Common myeloid progenitor, CD34-positive (primary cell): ENCODE measurements at regions of chr17 and their contacts with region 1.

Region 1: DNA sequence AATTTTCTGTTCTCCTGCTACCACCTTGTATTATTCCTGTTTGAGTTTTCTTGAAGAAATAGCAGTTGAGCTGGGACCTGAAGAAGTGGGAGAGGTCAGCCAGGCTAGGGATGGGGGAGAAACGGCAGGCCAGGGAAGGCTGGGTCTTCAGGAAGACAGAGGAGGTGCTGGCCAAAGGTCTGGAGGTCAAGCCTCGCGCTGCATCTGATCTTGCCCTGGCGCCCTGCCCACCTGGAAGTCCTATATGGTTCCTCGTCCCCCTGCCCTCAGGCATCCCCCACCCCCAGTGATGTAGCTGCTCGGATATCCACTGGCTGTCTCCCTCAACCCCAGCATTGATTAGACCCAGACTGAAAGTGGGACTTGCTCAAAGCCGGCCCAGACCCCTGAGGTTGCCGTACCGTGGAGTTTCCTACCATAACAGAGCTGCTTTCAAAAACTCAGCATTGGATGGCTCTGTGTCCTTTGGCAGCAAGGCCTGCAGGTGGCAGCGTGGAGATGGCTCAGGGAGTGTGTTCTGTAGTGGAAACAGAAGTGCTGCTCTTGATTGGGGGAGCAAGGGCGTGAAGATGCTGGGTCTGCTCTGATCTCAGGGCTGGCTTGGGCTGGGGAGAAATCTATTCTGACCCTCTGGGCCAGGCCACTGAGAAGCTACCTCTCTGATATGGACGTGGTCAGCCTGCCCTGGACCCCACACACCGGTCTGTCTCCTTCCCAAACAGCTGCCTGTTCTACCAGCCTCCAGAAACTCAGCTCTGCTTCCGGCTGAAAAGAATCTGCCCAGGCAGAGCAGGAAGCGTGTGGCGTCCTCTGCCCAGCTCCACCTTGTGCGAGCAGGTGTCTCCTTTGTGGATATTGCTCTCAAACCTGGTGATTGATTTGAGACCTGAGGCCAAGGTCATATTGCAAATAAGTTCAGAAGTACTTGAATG is 107.0 kb upstream of the CACNG5 start:
- DNase-seq: peak; percentile 56 to 79 (median 78)
- H3K4me3 ChIP-seq: peak overlapping the region in 1 of 7 experiments; percentile 6
- H3K27ac ChIP-seq: no peak overlapping the region
- H3K4me1 ChIP-seq: peaks cover 0 to 3% (median 0%) of the 10 kb centered on the region in 4 experiments
- H3K27me3 ChIP-seq: peaks cover 0 to 4% (median 0%) of the 10 kb centered on the region in 5 experiments

Region 2: DNA sequence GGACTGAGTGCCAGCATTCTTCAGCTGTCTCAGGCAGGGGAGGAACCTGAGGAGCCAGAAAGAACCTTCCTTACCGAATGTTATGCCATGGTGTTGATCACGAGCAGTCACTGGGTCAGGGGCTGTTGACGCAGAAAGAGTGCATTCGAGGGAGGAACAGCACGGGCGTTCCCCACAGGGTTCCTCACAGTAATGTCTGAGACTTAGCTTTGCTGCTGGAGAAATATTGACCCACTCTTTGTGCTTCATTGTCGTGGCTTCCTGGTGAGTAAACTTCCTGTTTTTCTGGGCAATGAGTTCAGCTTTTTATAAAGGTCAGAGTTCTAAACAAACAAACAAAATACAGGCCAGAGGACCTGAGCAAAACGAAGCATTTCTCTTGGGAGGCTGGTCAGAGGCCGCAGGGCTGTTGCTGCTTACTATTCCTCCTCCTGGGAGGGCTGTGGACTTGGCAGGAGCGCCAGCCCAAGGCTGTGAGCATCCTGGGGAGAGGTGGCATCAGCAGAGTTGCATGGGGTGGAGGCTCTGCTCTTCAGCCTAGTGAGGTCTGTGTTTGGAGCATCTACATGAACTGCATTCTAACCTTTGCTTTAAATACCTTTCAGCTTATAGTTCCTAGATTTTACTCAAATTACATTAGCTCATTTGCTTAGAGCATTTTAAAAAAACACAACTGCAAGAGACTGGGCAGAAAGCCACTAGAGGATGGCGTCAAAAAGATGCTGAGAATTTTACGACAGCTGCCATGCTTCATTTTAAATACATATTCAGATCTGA is 36.1 kb before region 1 on chr17:
- CTCF ChIA-PET with region 1: no interaction called
- POLR2A ChIA-PET with region 1: no interaction called
- DNase-seq: no peak
- H3K4me3 ChIP-seq: no peak overlapping the region
- H3K27ac ChIP-seq: no peak overlapping the region
- H3K4me1 ChIP-seq: peaks cover 0 to 9% (median 3%) of the 10 kb centered on the region in 4 experiments
- H3K27me3 ChIP-seq: no peaks in the 10 kb centered on the region

Region 3: GRCh38 chr17:66713533-66714042 is 14.3 kb before region 1 on chr17:
- CTCF ChIA-PET with region 1: interaction called, 11 read pairs
- POLR2A ChIA-PET with region 1: no interaction called
- DNase-seq: no peak
- H3K4me3 ChIP-seq: no peak overlapping the region
- H3K27ac ChIP-seq: no peak overlapping the region
- H3K4me1 ChIP-seq: peaks cover 5 to 22% (median 14%) of the 10 kb centered on the region in 4 experiments
- H3K27me3 ChIP-seq: no peaks in the 10 kb centered on the region

Region 4: DNA sequence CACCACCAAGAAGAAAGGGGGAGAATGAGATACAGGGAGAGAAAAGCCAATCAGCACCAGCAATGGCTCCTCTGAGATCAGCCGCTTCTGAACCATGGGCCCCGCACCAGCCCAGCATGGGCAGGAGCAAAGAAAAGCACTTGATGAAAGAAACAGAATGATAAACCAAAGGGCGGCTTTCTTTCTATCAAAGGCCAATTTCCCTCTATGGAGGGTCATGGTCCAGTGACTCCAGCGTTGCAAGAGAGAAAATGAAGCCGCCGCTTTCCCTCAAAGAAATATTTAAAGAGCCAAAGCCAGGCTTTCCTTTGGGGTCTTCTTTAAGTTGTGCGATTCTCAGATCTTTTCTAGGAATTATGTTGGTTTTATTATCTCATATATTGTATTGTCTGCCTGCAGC is 22.2 kb after region 1 on chr17:
- CTCF ChIA-PET with region 1: no interaction called
- POLR2A ChIA-PET with region 1: no interaction called
- DNase-seq: no peak
- H3K4me3 ChIP-seq: no peak overlapping the region
- H3K27ac ChIP-seq: no peak overlapping the region
- H3K4me1 ChIP-seq: no peaks in the 10 kb centered on the region
- H3K27me3 ChIP-seq: peaks cover 0 to 4% (median 0%) of the 10 kb centered on the region in 5 experiments

Region 5: DNA sequence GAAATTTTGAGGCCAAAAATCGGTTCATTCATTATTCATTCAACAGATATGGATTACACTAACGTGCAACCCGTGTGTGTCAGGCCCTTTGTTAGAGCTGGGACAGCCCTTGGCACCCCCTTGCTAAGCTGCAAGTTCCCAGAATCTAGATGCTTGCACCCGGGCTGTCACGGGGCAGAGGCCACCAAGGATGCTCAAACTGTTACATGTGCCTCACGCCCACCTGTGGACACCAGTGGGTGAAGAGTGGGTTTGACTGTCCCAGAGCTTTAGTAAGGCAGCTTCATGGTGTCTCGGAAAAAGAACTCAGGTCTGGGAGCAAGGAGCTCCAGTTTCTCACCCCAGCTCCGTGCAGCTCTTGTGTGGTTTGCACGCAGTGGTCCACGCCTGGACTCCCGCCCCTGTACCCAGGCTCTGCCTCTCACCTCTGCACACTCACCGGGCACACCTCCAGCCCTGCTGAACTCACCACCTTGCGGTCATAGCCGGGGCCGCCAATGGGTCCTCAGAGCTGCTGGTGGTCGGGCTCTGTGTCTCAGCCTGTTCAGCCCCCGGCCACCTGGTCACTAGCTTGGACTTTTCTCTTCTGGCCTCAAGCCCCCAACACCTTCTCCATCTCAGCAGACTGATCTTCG is 182.9 kb after region 1 on chr17:
- CTCF ChIA-PET with region 1: interaction called, 12 read pairs
- POLR2A ChIA-PET with region 1: no interaction called
- DNase-seq: no peak
- H3K4me3 ChIP-seq: no peak overlapping the region
- H3K27ac ChIP-seq: no peak overlapping the region
- H3K4me1 ChIP-seq: no peaks in the 10 kb centered on the region
- H3K27me3 ChIP-seq: peaks cover 0 to 2% (median 0%) of the 10 kb centered on the region in 5 experiments